ENCODE measurements at regions of chr10 and their contacts with region 1.

Region 1: DNA sequence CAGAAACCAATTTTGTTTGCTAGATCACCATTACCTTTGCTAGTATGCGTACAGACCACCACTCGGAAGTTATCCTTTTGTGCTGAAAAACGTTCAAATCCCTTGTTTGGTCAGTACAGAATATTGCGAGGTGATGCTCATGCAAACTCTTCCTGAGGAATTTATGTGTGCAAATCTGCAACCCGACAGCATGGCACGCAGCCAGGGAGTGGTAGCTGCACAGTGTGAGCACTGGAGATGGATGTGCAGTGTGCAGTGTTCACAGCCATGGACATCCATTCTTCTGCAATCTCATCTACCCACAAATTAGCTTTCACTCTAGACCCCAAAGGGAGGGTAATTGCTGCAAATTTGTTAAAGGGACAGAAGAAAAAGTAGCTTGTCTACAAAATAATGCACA is 72.2 kb downstream of the CACUL1 start:
- DNase-seq: no peak
- H3K4me3 ChIP-seq: no peak overlapping the region
- H3K27ac ChIP-seq: no peak overlapping the region
- H3K4me1 ChIP-seq: no peaks in the 10 kb centered on the region
- H3K27me3 ChIP-seq: no peaks in the 10 kb centered on the region
- CTCF ChIP-seq: no peak

Region 2: DNA sequence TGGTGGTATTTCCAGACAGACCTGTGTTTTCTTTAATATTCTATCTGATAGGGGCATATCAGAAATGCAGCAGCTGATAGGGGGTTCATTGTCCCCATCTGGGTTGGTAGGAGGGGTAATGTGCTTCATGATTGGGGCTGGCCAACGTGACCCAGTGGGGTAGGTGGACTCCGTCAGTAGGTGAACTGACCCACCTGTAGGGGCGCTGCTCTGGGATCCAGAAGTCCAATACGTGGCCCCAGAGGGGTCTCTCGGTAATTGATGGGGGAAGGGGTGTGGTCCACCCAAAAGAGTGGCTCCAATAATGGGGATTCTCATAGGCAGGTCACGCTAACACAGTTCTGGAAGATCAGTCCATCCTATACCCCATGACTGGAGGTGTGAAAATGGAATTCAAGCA is 199.0 kb before region 1 on chr10:
- CTCF ChIA-PET with region 1: no interaction called
- dilution Hi-C with region 1: no loop called
- in situ Hi-C with region 1: no loop called
- intact Hi-C with region 1: no loop called
- DNase-seq: no peak
- H3K4me3 ChIP-seq: no peak overlapping the region
- H3K27ac ChIP-seq: no peak overlapping the region
- H3K4me1 ChIP-seq: no peaks in the 10 kb centered on the region
- H3K27me3 ChIP-seq: no peaks in the 10 kb centered on the region
- CTCF ChIP-seq: no peak

Region 3: GRCh38 chr10:118712930-118713634 is 30.5 kb after region 1 on chr10:
- CTCF ChIA-PET with region 1: no interaction called
- dilution Hi-C with region 1: no loop called
- in situ Hi-C with region 1: no loop called
- intact Hi-C with region 1: loop called (anchors 1 kb)
- DNase-seq: no peak
- H3K4me3 ChIP-seq: no peak overlapping the region
- H3K27ac ChIP-seq: no peak overlapping the region
- H3K4me1 ChIP-seq: no peaks in the 10 kb centered on the region
- H3K27me3 ChIP-seq: no peaks in the 10 kb centered on the region
- CTCF ChIP-seq: no peak

Measured in mammary epithelial cell (primary cell).